Stomach (tissue), 19 donors: ENCODE measurements at regions of chr16 and their contacts with region 1.

Region 1: GRCh38 chr16:53054670-53055485 is at the start of gene CHD9:
- DNase-seq: peak; percentile 89 to 96
- H3K4me3 ChIP-seq: peak within 1 kb of the TSS; percentile 67 to 80 (median 72)
- H3K27ac ChIP-seq: peak within 1 kb of the TSS; percentile 81 to 94 (median 90)
- H3K4me1 ChIP-seq: peaks cover 21 to 58% (median 41%) of the 10 kb centered on the region in 4 donors
- H3K27me3 ChIP-seq: no peaks in the 10 kb centered on the region
- CTCF ChIP-seq: peak in 6 of 7 experiments; percentile 91 to 100 (median 99)
- EP300 ChIP-seq: no peak
- POLR2A ChIP-seq: no peak
- total RNA-seq, gene CHD9: 26.6 to 224 (median 78.1) TPM

Region 2: DNA sequence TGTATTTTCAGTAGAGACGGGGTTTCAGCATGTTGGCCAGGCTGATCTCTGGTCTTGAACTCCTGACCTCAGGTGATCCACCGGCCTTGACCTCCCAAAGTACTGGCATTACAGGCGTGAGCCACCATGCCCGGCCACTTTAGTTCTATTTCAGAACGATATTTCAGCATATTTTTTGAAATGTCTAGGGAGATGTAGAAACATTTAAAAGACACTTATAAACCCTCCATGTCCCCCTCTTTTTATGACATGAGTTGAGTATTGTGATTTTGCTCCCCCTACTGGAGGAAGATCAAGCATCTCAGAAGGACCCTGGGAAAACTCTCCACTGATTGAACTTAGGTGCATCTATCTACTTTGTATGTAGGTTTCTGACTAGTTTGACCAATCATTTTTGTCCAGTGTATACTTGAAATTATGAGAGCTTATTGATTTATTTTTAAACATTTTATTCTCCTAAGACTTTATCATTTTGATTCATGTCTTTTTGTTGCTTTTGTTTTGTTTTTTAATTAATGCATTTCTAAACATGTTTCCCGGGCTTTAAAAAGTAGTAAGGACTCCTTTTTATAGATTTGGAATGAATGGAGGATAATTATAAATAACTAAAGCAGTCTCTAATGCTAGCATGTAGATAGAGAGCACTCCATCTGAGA is 105.0 kb after region 1 on chr16:
- intact Hi-C with region 1: loop called (anchors 10 kb)
- DNase-seq: peak in 1 of 2 donors; percentile 77
- H3K4me3 ChIP-seq: no peak overlapping the region
- H3K27ac ChIP-seq: no peak overlapping the region
- H3K4me1 ChIP-seq: peaks cover 0 to 6% (median 3%) of the 10 kb centered on the region in 4 donors
- H3K27me3 ChIP-seq: no peaks in the 10 kb centered on the region
- CTCF ChIP-seq: peak in 5 of 7 experiments; percentile 39 to 73 (median 58)
- EP300 ChIP-seq: no peak
- POLR2A ChIP-seq: no peak